T-cell (primary cell): ENCODE measurements at regions of chr7 and their contacts with region 1.

Region 1: GRCh38 chr7:130966246-130967009 is 232.4 kb upstream of the KLF14 start:
- DNase-seq: no peak
- ATAC-seq: no peak
- H3K4me3 ChIP-seq: no peak overlapping the region
- H3K4me3 Mint-ChIP-seq: no peak overlapping the region
- H3K27ac ChIP-seq: no peak overlapping the region
- H3K27ac Mint-ChIP-seq: peak overlapping the region; percentile 47 to 56
- H3K4me1 ChIP-seq: peaks cover 11 to 35% of the 10 kb centered on the region in 2 experiments
- H3K4me1 Mint-ChIP-seq: peaks cover 60 to 71% (median 63%) of the 10 kb centered on the region in 3 donors
- H3K27me3 ChIP-seq: no peaks in the 10 kb centered on the region
- H3K27me3 Mint-ChIP-seq: no peaks in the 10 kb centered on the region

Region 2: DNA sequence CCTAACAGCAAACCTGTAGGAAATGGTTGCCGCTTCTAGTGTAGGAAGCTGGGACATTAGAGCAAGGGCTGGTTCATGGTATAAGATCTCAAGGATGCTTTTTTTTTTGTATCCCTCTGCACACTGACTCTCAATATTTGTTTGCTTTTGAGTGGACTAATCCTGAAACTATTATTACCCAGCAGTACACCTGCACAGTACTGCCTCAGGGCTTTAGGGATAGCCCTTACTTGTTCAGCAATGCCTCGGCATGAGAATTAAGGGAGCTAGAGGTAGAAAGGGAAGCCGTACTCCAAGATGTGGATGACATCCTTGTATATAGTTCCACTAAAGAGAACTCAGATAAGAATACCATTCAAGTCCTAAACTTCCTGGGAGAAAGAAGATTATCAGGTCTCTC is 368.4 kb before region 1 on chr7:
- CTCF ChIA-PET with region 1: no interaction called
- POLR2A ChIA-PET with region 1: no interaction called
- DNase-seq: no peak
- ATAC-seq: no peak
- H3K4me3 ChIP-seq: no peak overlapping the region
- H3K4me3 Mint-ChIP-seq: no peak overlapping the region
- H3K27ac ChIP-seq: no peak overlapping the region
- H3K27ac Mint-ChIP-seq: no peak overlapping the region
- H3K4me1 ChIP-seq: no peaks in the 10 kb centered on the region
- H3K4me1 Mint-ChIP-seq: no peaks in the 10 kb centered on the region
- H3K27me3 ChIP-seq: no peaks in the 10 kb centered on the region
- H3K27me3 Mint-ChIP-seq: no peaks in the 10 kb centered on the region

Region 3: GRCh38 chr7:130890176-130891020 is 76.0 kb before region 1 on chr7:
- CTCF ChIA-PET with region 1: no interaction called
- POLR2A ChIA-PET with region 1: interaction called in 1 of 2 experiments, 10 read pairs
- DNase-seq: no peak
- ATAC-seq: no peak
- H3K4me3 ChIP-seq: no peak overlapping the region
- H3K4me3 Mint-ChIP-seq: no peak overlapping the region
- H3K27ac ChIP-seq: no peak overlapping the region
- H3K27ac Mint-ChIP-seq: peak overlapping the region in 1 of 2 donors; percentile 75
- H3K4me1 ChIP-seq: peaks cover 3 to 23% of the 10 kb centered on the region in 2 experiments
- H3K4me1 Mint-ChIP-seq: peaks cover 34 to 59% (median 56%) of the 10 kb centered on the region in 3 donors
- H3K27me3 ChIP-seq: no peaks in the 10 kb centered on the region
- H3K27me3 Mint-ChIP-seq: no peaks in the 10 kb centered on the region

Region 4: DNA sequence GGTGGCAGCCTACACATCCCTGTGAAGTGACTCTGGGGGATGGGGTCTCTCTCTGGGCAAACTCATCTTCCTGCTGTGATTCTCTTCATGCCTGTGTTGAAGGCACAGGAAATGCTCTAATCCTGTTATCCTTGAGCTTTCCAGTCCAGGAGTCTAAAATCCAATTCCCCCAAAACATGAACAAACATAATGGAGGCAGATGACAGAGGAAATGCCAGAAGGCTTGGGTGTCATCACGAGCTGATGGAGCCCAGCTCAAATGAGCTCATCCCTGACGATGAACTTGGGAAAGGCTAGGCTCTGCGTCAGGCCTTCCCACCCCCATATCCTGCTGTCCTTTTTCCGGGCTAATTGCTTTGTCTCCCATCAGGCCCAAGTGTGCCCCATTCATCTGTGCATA is 755.9 kb after region 1 on chr7:
- CTCF ChIA-PET with region 1: no interaction called
- POLR2A ChIA-PET with region 1: no interaction called
- DNase-seq: no peak
- ATAC-seq: no peak
- H3K4me3 ChIP-seq: no peak overlapping the region
- H3K4me3 Mint-ChIP-seq: no peak overlapping the region
- H3K27ac ChIP-seq: no peak overlapping the region
- H3K27ac Mint-ChIP-seq: no peak overlapping the region
- H3K4me1 ChIP-seq: no peaks in the 10 kb centered on the region
- H3K4me1 Mint-ChIP-seq: no peaks in the 10 kb centered on the region
- H3K27me3 ChIP-seq: peaks cover 2 to 13% of the 10 kb centered on the region in 2 experiments
- H3K27me3 Mint-ChIP-seq: peaks cover 19 to 21% of the 10 kb centered on the region in 2 donors